Heart right ventricle (tissue), 16 donors: ENCODE measurements at regions of chr10 and their contacts with region 1.

Region 1: GRCh38 chr10:102132563-102133372 is at the start of gene PPRC1:
- DNase-seq: peak; percentile 97 to 99
- ATAC-seq: peak; percentile 93 to 98 (median 96)
- H3K4me3 ChIP-seq: peak within 1 kb of the TSS; percentile 54 to 99 (median 88)
- H3K27ac ChIP-seq: peak within 1 kb of the TSS; percentile 60 to 97 (median 96)
- H3K4me1 ChIP-seq: peaks cover 6 to 46% (median 41%) of the 10 kb centered on the region in 9 donors
- H3K27me3 ChIP-seq: no peaks in the 10 kb centered on the region
- CTCF ChIP-seq: peak; percentile 84 to 97 (median 91)
- total RNA-seq, gene PPRC1: 10.6 to 22.7 (median 13.0) TPM

Region 2: GRCh38 chr10:102064868-102065560 is 67.8 kb before region 1 on chr10 and contains the start of gene HPS6:
- intact Hi-C with region 1: loop called in 1 of 10 experiments (anchors 2 kb)
- DNase-seq: peak; percentile 90 to 93
- ATAC-seq: peak; percentile 97 to 98 (median 98)
- H3K4me3 ChIP-seq: peak within 1 kb of the TSS; percentile 49 to 96 (median 85)
- H3K27ac ChIP-seq: peak within 1 kb of the TSS; percentile 25 to 97 (median 93)
- H3K4me1 ChIP-seq: peaks cover 10 to 45% (median 33%) of the 10 kb centered on the region in 9 donors
- H3K27me3 ChIP-seq: no peaks in the 10 kb centered on the region
- CTCF ChIP-seq: peak in 7 of 9 donors; percentile 7 to 47 (median 28)
- total RNA-seq, gene HPS6: 8.2 to 13.6 (median 11.1) TPM

Region 3: GRCh38 chr10:102120142-102120990 is 12.4 kb before region 1 on chr10 and contains the start of gene LDB1:
- intact Hi-C with region 1: loop called in 1 of 10 experiments (anchors 1 kb)
- DNase-seq: peak; percentile 83 to 86
- ATAC-seq: peak; percentile 49 to 78 (median 67)
- H3K4me3 ChIP-seq: peak within 1 kb of the TSS; percentile 62 to 99 (median 90)
- H3K27ac ChIP-seq: peak within 1 kb of the TSS; percentile 94 to 100 (median 97)
- H3K4me1 ChIP-seq: peaks cover 11 to 59% (median 57%) of the 10 kb centered on the region in 9 donors
- H3K27me3 ChIP-seq: no peaks in the 10 kb centered on the region
- CTCF ChIP-seq: peak in 3 of 9 donors; percentile 10 to 41 (median 29)
- total RNA-seq, gene LDB1: 39.2 to 63.8 (median 56.3) TPM

Region 4: DNA sequence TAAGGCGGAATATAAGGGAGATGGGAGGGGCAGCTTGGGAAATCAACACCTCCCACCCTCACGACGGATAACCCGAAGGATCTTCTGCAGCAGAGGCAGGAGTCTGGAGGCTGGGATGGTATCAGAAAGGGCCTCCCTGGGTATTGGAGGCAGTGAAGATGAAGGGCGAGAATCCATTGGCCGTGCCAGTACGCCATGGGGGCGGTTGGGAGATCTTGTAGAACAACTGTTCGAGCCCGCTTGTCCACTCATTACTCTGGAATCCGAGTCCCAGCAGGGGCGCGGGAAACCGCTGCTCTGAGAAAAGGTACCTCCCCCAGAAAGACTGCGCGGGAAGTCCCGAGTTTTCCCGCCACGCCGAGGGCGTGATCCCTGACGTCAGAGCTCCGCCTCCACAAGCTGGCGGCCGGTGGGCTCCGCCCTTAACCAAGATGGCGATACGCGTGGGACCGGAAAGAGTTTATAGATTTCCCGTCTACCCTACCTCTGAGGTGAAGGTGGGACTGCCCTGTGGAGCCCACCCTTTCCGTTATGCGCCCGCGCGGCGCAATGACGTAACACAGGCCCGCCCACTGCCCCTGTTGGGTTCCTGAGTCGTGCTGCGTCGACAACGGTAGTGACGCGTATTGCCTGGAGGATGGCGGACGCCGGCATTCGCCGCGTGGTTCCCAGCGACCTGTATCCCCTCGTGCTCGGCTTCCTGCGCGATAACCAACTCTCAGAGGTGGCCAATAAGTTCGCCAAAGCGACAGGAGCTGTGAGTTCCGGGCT is 19.2 kb after region 1 on chr10 and contains the start of gene NOLC1:
- intact Hi-C with region 1: loop called in 3 of 10 experiments (anchors 1 kb)
- DNase-seq: peak; percentile 99
- ATAC-seq: peak; percentile 98 to 99 (median 99)
- H3K4me3 ChIP-seq: peak within 1 kb of the TSS; percentile 71 to 96 (median 84)
- H3K27ac ChIP-seq: peak within 1 kb of the TSS; percentile 46 to 94 (median 89)
- H3K4me1 ChIP-seq: peaks cover 4 to 33% (median 22%) of the 10 kb centered on the region in 9 donors
- H3K27me3 ChIP-seq: no peaks in the 10 kb centered on the region
- CTCF ChIP-seq: no peak
- total RNA-seq, gene NOLC1: 22.3 to 45.5 (median 29.0) TPM

Region 5: GRCh38 chr10:102503281-102504220 is 370.8 kb after region 1 on chr10 and contains the start of gene SUFU:
- intact Hi-C with region 1: loop called in 1 of 10 experiments (anchors 5 kb)
- DNase-seq: peak; percentile 96 to 99
- ATAC-seq: peak; percentile 80 to 90 (median 84)
- H3K4me3 ChIP-seq: peak within 1 kb of the TSS; percentile 66 to 99 (median 88)
- H3K27ac ChIP-seq: peak within 1 kb of the TSS in 9 of 10 donors; percentile 79 to 96 (median 94)
- H3K4me1 ChIP-seq: peaks cover 11 to 69% (median 47%) of the 10 kb centered on the region in 9 donors
- H3K27me3 ChIP-seq: no peaks in the 10 kb centered on the region
- CTCF ChIP-seq: peak; percentile 89 to 99 (median 94)
- total RNA-seq, gene SUFU: 5.7 to 10.1 (median 7.5) TPM